IMR-90 (cell line): ENCODE measurements at regions of chr13 and their contacts with region 1.

Region 1: GRCh38 chr13:99656092-99656745 is 154.9 kb downstream of the TM9SF2 start:
- DNase-seq: peak; percentile 67
- ATAC-seq: peak; percentile 85
- H3K4me3 ChIP-seq: no peak overlapping the region
- H3K27ac ChIP-seq: no peak overlapping the region
- H3K4me1 ChIP-seq: no peaks in the 10 kb centered on the region
- H3K27me3 ChIP-seq: peaks cover 23% of the 10 kb centered on the region
- CTCF ChIP-seq: peak; percentile 87
- POLR2A ChIP-seq: no peak
- RAD21 ChIP-seq: peak; percentile 83

Region 2: GRCh38 chr13:99909824-99910619 is 253.8 kb after region 1 on chr13:
- CTCF ChIA-PET with region 1: no interaction called
- POLR2A ChIA-PET with region 1: no interaction called
- dilution Hi-C with region 1: no loop called
- in situ Hi-C with region 1: no loop called
- intact Hi-C with region 1: loop called (anchors 5 kb)
- DNase-seq: no peak
- ATAC-seq: no peak
- H3K4me3 ChIP-seq: no peak overlapping the region
- H3K27ac ChIP-seq: no peak overlapping the region
- H3K4me1 ChIP-seq: no peaks in the 10 kb centered on the region
- H3K27me3 ChIP-seq: peaks cover 31% of the 10 kb centered on the region
- CTCF ChIP-seq: no peak
- POLR2A ChIP-seq: no peak
- RAD21 ChIP-seq: no peak

Region 3: DNA sequence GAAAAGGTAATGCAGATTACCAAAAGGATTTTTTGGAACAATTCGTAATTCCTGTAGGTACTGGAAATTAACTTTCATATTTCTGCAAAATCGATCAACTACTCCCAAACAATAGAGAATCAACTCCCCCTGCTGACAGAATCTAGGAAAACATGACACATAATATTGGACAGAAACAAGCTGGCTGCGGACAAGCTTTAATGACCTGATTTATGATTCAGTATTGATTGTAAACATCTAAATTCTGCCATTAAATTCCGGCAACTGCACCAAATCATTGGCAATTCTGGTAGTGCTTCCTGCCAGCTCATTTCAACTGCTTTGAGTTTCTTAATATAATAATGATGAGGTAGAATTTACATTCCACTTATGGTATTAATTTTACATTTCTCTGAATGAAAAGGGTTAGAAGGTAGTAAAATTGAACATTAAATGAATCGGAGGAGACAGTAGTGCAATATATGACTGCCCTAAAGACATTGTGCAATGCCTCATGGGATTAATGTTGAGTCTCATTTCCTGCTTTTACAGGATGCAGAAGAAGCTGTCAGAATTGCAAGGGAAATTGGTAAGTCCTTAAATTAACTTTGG is 579.2 kb after region 1 on chr13:
- CTCF ChIA-PET with region 1: no interaction called
- POLR2A ChIA-PET with region 1: no interaction called
- dilution Hi-C with region 1: no loop called
- in situ Hi-C with region 1: loop called (anchors 10 kb)
- intact Hi-C with region 1: loop called (anchors 2 kb)
- DNase-seq: peak; percentile 63
- ATAC-seq: 0 out of 2 replicates have a peak, but pooled peaks have one; percentile 42
- H3K4me3 ChIP-seq: no peak overlapping the region
- H3K27ac ChIP-seq: no peak overlapping the region
- H3K4me1 ChIP-seq: peaks cover 4% of the 10 kb centered on the region
- H3K27me3 ChIP-seq: no peaks in the 10 kb centered on the region
- CTCF ChIP-seq: peak; percentile 75
- POLR2A ChIP-seq: no peak
- RAD21 ChIP-seq: peak; percentile 80

Region 4: GRCh38 chr13:101098873-101099272 is 1442.7 kb after region 1 on chr13:
- CTCF ChIA-PET with region 1: no interaction called
- POLR2A ChIA-PET with region 1: no interaction called
- dilution Hi-C with region 1: no loop called
- in situ Hi-C with region 1: loop called (anchors 25 kb)
- intact Hi-C with region 1: loop called (anchors 5 kb)
- DNase-seq: peak; percentile 7
- ATAC-seq: peak; percentile 35; the same call in 1 of the 2 replicates
- H3K4me3 ChIP-seq: no peak overlapping the region
- H3K27ac ChIP-seq: no peak overlapping the region
- H3K4me1 ChIP-seq: no peaks in the 10 kb centered on the region
- H3K27me3 ChIP-seq: no peaks in the 10 kb centered on the region
- CTCF ChIP-seq: no peak
- POLR2A ChIP-seq: no peak
- RAD21 ChIP-seq: no peak